ENCODE measurements at regions of chr9 and their contacts with region 1.

Region 1: GRCh38 chr9:115117999-115118878 is at the start of gene TNC:
- DNase-seq: peak; percentile 25
- H3K4me3 Mint-ChIP-seq: peak within 1 kb of the TSS; percentile 58
- H3K27ac Mint-ChIP-seq: no peak within 1 kb of the TSS
- H3K4me1 Mint-ChIP-seq: peaks cover 9% of the 10 kb centered on the region
- H3K27me3 Mint-ChIP-seq: no peaks in the 10 kb centered on the region
- CTCF ChIP-seq: no peak
- total RNA-seq, gene TNC: 0.29 and 1.0 TPM in 2 replicates

Region 2: DNA sequence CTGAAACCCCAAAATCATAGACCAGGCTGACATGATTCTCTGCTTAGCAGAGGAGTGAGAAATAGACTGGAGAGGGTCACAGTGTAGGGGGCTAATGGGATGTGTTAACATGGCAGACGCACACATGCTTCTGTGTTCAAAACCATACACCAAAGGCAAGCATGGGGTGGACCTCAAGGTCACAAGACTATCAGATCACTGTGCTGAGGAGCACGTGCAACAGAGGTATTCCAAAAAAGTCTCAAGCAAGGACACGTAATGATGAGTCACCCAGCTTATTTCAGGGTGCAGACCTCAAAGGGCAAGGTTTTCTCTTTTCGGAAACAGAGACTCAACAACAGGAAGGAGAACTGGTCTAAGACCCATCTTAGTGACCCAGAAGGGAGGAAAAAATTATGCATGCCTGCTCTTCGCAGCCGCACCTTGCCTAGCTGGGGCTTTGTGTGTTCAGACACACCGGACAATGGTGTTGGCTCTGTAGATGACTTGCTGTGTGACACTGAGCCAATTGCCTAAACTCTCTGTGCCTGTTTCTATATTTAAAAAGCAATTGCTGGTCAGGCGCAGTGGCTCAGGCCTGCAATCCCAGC is 633.3 kb before region 1 on chr9:
- CTCF ChIA-PET with region 1: no interaction called
- intact Hi-C with region 1: no loop called
- DNase-seq: peak; percentile 8
- H3K4me3 Mint-ChIP-seq: no peak overlapping the region
- H3K27ac Mint-ChIP-seq: no peak overlapping the region
- H3K4me1 Mint-ChIP-seq: peaks cover 23% of the 10 kb centered on the region
- H3K27me3 Mint-ChIP-seq: no peaks in the 10 kb centered on the region
- CTCF ChIP-seq: no peak

Region 3: GRCh38 chr9:115204904-115205453 is 86.7 kb after region 1 on chr9:
- CTCF ChIA-PET with region 1: no interaction called
- intact Hi-C with region 1: loop called (anchors 10 kb)
- DNase-seq: no peak
- H3K4me3 Mint-ChIP-seq: no peak overlapping the region
- H3K27ac Mint-ChIP-seq: no peak overlapping the region
- H3K4me1 Mint-ChIP-seq: peaks cover 18% of the 10 kb centered on the region
- H3K27me3 Mint-ChIP-seq: peaks cover 7% of the 10 kb centered on the region
- CTCF ChIP-seq: no peak

Measured in Calu3 (cell line).